Activated B cell treated with CpG ODN at 0.5 μM for 24 hours (primary cell): ENCODE measurements at regions of chr10 and their contacts with region 1.

Region 1: DNA sequence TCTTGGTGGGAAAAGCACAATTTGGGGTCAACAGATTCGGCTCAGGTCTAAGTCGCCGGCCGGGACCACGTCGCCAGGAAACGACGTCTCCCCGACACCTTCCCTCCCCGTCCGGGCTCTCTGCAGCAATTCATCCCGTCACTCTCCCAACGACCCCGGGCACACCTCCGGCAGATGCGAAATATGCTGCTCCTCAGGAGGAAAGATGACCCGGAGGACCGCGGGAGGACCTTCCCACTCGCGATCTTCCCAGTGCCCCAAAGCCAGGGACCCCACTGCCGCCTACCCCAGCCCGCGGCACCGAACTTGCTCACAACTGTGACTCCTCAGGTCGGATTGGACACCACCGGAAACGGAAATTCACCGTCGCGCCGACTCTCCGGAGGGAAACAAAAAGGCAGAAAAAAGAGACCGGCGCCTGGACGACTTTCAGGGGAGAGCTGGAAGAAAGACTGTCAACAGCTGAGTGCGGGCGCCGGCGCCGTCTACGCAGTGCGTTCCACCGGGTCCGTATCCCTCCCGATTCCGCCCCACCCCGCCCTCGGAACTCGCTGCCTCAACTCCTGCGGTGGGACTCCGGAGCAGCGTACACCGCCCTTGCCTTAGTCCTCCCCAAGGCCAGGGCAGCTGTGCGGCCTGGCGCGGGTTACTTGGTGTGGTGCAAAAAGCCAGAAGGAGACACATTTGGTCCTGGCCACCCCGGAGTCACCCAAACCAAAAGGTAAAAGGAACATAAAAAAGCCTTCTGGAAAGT is 13.8 kb upstream of the SEC24C start:
- DNase-seq: peak; percentile 89
- ATAC-seq: peak; percentile 93
- H3K4me3 Mint-ChIP-seq: peak overlapping the region; percentile 99
- H3K27ac Mint-ChIP-seq: peak overlapping the region; percentile 96
- H3K4me1 Mint-ChIP-seq: peaks cover 22% of the 10 kb centered on the region
- H3K27me3 Mint-ChIP-seq: no peaks in the 10 kb centered on the region
- CTCF ChIP-seq: no peak

Region 2: DNA sequence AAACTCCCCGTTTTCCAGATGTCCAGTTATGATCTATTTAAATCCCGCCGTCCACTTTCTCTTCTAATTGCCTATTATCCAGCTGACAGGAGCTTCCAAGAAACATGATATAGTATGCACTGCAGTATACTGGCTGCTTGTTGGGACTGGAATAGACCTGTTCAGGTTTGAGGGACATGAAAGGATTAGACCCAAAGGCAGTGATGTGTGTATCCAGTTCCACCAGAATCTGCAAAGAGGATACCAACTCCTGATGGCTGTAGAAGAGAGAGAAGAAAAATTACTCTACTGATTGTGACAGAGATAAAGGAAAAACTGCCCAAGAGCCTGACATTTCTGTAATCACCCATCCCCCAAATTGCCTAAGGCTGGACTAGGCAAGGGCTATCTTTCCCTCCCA is 305.8 kb before region 1 on chr10:
- CTCF ChIA-PET with region 1: no interaction called
- POLR2A ChIA-PET with region 1: interaction called, 12 read pairs
- intact Hi-C with region 1: no loop called
- DNase-seq: no peak
- ATAC-seq: no peak
- H3K4me3 Mint-ChIP-seq: no peak overlapping the region
- H3K27ac Mint-ChIP-seq: no peak overlapping the region
- H3K4me1 Mint-ChIP-seq: peaks cover 14% of the 10 kb centered on the region
- H3K27me3 Mint-ChIP-seq: no peaks in the 10 kb centered on the region
- CTCF ChIP-seq: no peak

Region 3: DNA sequence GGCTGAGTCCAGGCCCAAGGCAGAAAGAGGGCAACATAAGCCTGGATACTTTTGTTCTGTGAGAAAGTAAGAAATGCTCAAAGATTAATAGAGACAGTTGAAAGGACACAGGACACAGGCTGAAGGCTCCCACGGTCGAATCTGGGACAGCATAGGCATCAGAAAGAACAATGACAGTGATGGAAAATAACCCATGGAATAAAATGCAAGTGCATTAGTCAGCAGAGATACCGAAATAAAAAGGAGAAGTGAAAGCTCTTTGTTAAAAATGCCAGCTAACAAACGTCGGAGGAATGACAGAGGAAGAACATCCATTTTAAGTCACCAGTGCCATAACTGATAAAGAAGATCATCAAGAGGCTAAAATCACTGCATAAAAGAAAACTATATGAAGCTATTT is 12.8 kb before region 1 on chr10:
- CTCF ChIA-PET with region 1: no interaction called
- POLR2A ChIA-PET with region 1: interaction called, 12 read pairs
- intact Hi-C with region 1: no loop called
- DNase-seq: no peak
- ATAC-seq: peak; percentile 72
- H3K4me3 Mint-ChIP-seq: no peak overlapping the region
- H3K27ac Mint-ChIP-seq: peak overlapping the region; percentile 76
- H3K4me1 Mint-ChIP-seq: peaks cover 12% of the 10 kb centered on the region
- H3K27me3 Mint-ChIP-seq: no peaks in the 10 kb centered on the region
- CTCF ChIP-seq: no peak

Region 4: DNA sequence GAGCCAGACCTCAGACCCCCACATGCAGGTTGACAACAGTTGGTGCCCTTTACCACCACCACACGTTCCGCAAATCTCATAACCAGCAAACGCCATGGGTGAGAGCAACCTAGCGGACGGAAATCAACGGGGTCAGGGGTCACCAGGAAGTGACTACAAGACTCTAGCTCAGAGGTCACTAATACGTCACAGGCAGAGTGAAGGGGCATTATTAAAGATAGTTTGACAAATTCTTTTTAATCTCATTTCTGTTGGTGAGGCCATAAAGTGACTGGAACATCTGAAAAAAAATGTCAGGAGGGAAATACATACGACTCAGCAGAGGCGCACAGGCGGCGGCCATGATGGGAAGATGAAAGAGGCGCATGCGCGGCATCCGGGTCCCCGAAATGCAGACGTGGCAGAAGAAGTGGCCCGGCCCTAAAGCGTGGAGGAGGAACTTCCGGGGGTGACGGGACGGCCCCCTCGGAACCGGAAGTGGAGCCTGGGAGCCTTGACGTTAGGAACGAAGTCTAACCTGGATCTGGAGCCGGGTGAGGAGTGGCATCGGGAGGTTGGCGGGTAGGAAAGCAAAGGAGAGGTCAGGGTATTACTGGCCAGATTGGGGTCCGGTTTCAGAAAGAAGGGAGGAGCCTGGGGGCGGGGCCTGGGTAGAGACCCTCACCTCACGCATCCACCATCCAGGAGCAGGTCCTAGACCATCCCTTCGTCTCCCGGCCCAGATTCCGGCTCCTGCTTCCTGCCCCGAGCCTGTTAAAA is 13.8 kb after region 1 on chr10 and contains the start of gene SEC24C:
- CTCF ChIA-PET with region 1: interaction called, 3 read pairs
- POLR2A ChIA-PET with region 1: interaction called, 48 read pairs
- intact Hi-C with region 1: loop called (anchors 1 kb)
- DNase-seq: peak; percentile 86
- ATAC-seq: peak; percentile 95
- H3K4me3 Mint-ChIP-seq: peak within 1 kb of the TSS; percentile 100
- H3K27ac Mint-ChIP-seq: peak within 1 kb of the TSS; percentile 100
- H3K4me1 Mint-ChIP-seq: peaks cover 41% of the 10 kb centered on the region
- H3K27me3 Mint-ChIP-seq: no peaks in the 10 kb centered on the region
- CTCF ChIP-seq: no peak
- total RNA-seq, gene SEC24C: 78.5 and 89.8 TPM in 2 replicates

Region 5: GRCh38 chr10:73785221-73785720 is 54.9 kb after region 1 on chr10 and contains the start of gene ZSWIM8:
- CTCF ChIA-PET with region 1: no interaction called
- POLR2A ChIA-PET with region 1: interaction called, 6 read pairs
- intact Hi-C with region 1: loop called (anchors 1 kb)
- DNase-seq: peak; percentile 78
- ATAC-seq: peak; percentile 88
- H3K4me3 Mint-ChIP-seq: peak within 1 kb of the TSS; percentile 99
- H3K27ac Mint-ChIP-seq: peak within 1 kb of the TSS; percentile 98
- H3K4me1 Mint-ChIP-seq: peaks cover 57% of the 10 kb centered on the region
- H3K27me3 Mint-ChIP-seq: no peaks in the 10 kb centered on the region
- CTCF ChIP-seq: no peak
- total RNA-seq, gene ZSWIM8: 67.5 and 93.0 TPM in 2 replicates

Region 6: GRCh38 chr10:73879296-73880173 is 149.2 kb after region 1 on chr10:
- CTCF ChIA-PET with region 1: no interaction called
- POLR2A ChIA-PET with region 1: no interaction called
- intact Hi-C with region 1: loop called (anchors 1 kb)
- DNase-seq: peak; percentile 86
- ATAC-seq: peak; percentile 96
- H3K4me3 Mint-ChIP-seq: no peak overlapping the region
- H3K27ac Mint-ChIP-seq: peak overlapping the region; percentile 67
- H3K4me1 Mint-ChIP-seq: peaks cover 22% of the 10 kb centered on the region
- H3K27me3 Mint-ChIP-seq: no peaks in the 10 kb centered on the region
- CTCF ChIP-seq: no peak